IMR-90 (cell line): ENCODE measurements at regions of chr2 and their contacts with region 1.

Region 1: GRCh38 chr2:38315707-38316333 is 61.3 kb downstream of the ATL2 start:
- DNase-seq: peak; percentile 59
- ATAC-seq: peak; percentile 85
- H3K4me3 ChIP-seq: no peak overlapping the region
- H3K27ac ChIP-seq: no peak overlapping the region
- H3K4me1 ChIP-seq: no peaks in the 10 kb centered on the region
- H3K27me3 ChIP-seq: no peaks in the 10 kb centered on the region
- CTCF ChIP-seq: peak; percentile 81
- POLR2A ChIP-seq: no peak
- RAD21 ChIP-seq: peak; percentile 78

Region 2: DNA sequence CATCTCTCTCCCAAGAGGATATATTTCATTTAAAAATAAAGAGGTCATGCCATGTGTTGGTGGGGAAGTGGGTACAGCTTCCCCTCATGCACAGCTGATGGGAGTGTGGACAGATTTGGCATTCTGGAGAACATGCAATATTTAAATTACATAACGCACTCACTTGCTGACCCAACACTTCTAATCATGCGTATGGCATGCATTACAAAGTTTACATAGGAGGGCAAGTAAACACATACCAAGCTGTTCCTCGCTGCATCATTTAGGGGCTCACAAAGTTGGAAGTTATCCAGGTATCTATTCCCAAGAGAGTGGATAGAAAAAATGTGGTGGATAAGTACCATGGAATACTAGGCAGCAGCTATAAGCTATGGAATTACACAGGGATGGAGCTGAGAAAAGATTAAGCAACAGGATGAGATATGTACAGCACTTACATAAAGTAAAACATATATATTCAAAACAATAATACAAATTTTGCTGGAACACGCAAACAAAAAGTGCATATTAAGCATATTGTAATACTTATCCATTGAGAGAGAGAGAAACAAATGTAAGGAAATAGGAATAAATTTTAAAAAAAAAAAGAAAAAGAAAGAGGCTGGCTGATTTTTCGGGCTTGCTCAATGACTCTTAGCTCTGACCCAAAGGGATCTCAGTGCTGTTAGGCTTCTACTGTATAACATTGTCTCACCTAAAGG is 250.9 kb before region 1 on chr2:
- CTCF ChIA-PET with region 1: no interaction called
- POLR2A ChIA-PET with region 1: no interaction called
- dilution Hi-C with region 1: no loop called
- in situ Hi-C with region 1: no loop called
- intact Hi-C with region 1: no loop called
- DNase-seq: no peak
- ATAC-seq: peak; percentile 27
- H3K4me3 ChIP-seq: no peak overlapping the region
- H3K27ac ChIP-seq: no peak overlapping the region
- H3K4me1 ChIP-seq: peaks cover 3% of the 10 kb centered on the region
- H3K27me3 ChIP-seq: peaks cover 2% of the 10 kb centered on the region; the same call in 1 of the 2 replicates
- CTCF ChIP-seq: no peak
- POLR2A ChIP-seq: no peak
- RAD21 ChIP-seq: no peak

Region 3: GRCh38 chr2:38377050-38377828 is 61.4 kb after region 1 on chr2 and contains the start of gene ATL2:
- CTCF ChIA-PET with region 1: interaction called, 8 read pairs
- POLR2A ChIA-PET with region 1: no interaction called
- dilution Hi-C with region 1: no loop called
- in situ Hi-C with region 1: no loop called
- intact Hi-C with region 1: loop called (anchors 5 kb)
- DNase-seq: peak; percentile 93
- ATAC-seq: peak; percentile 90
- H3K4me3 ChIP-seq: peak within 1 kb of the TSS; percentile 95
- H3K27ac ChIP-seq: peak within 1 kb of the TSS; percentile 83
- H3K4me1 ChIP-seq: peaks cover 2% of the 10 kb centered on the region
- H3K27me3 ChIP-seq: peaks cover 6% of the 10 kb centered on the region
- CTCF ChIP-seq: no peak
- POLR2A ChIP-seq: peak; percentile 92
- RAD21 ChIP-seq: no peak
- total RNA-seq, gene ATL2: 62.6 and 83.6 TPM in 2 replicates

Region 4: GRCh38 chr2:38528008-38528442 is 212.2 kb after region 1 on chr2:
- CTCF ChIA-PET with region 1: interaction called, 3 read pairs
- POLR2A ChIA-PET with region 1: no interaction called
- dilution Hi-C with region 1: no loop called
- in situ Hi-C with region 1: loop called (anchors 25 kb)
- intact Hi-C with region 1: loop called (anchors 5 kb)
- DNase-seq: peak; percentile 69
- ATAC-seq: peak; percentile 94
- H3K4me3 ChIP-seq: peak overlapping the region; percentile 82
- H3K27ac ChIP-seq: 0 out of 2 replicates have a peak overlapping the region, but pooled peaks have one; percentile 2
- H3K4me1 ChIP-seq: no peaks in the 10 kb centered on the region; the same call in 1 of the 2 replicates
- H3K27me3 ChIP-seq: peaks cover 23% of the 10 kb centered on the region
- CTCF ChIP-seq: no peak
- POLR2A ChIP-seq: no peak
- RAD21 ChIP-seq: 0 out of 2 replicates have a peak, but pooled peaks have one; percentile 1

Region 5: DNA sequence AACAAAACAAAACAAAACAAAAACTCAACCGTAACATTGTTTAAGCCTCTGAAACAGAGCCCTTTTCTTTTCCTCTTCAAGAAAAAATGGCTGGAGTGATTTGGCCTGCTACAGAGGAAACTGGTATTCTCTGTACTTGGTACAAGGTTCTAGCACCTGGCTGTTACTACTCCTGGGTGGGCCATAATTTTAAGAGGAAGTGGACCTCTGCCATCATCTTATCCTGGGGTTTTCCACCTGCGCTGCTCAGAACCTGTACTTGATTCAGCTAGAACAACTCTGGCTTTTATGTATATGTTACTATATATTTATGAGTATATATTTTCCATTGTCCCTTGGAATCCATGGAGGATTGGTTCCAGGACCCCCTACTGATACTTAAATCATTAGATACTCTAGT is 412.9 kb after region 1 on chr2:
- CTCF ChIA-PET with region 1: no interaction called
- POLR2A ChIA-PET with region 1: no interaction called
- dilution Hi-C with region 1: no loop called
- in situ Hi-C with region 1: loop called (anchors 5 kb)
- intact Hi-C with region 1: loop called (anchors 5 kb)
- DNase-seq: no peak
- ATAC-seq: no peak
- H3K4me3 ChIP-seq: no peak overlapping the region
- H3K27ac ChIP-seq: no peak overlapping the region
- H3K4me1 ChIP-seq: no peaks in the 10 kb centered on the region
- H3K27me3 ChIP-seq: no peaks in the 10 kb centered on the region
- CTCF ChIP-seq: no peak
- POLR2A ChIP-seq: no peak
- RAD21 ChIP-seq: no peak

Region 6: GRCh38 chr2:38740851-38741731 is 425.3 kb after region 1 on chr2:
- CTCF ChIA-PET with region 1: no interaction called
- POLR2A ChIA-PET with region 1: no interaction called
- dilution Hi-C with region 1: no loop called
- in situ Hi-C with region 1: no loop called
- intact Hi-C with region 1: loop called (anchors 2 kb)
- DNase-seq: peak; percentile 53
- ATAC-seq: peak; percentile 55; the same call in 1 of the 2 replicates
- H3K4me3 ChIP-seq: no peak overlapping the region
- H3K27ac ChIP-seq: no peak overlapping the region
- H3K4me1 ChIP-seq: no peaks in the 10 kb centered on the region; the same call in 1 of the 2 replicates
- H3K27me3 ChIP-seq: no peaks in the 10 kb centered on the region
- CTCF ChIP-seq: peak; percentile 56
- POLR2A ChIP-seq: no peak
- RAD21 ChIP-seq: peak; percentile 49